Endothelial cell of umbilical vein (primary cell): ENCODE measurements at regions of chr2 and their contacts with region 1.

Region 1: DNA sequence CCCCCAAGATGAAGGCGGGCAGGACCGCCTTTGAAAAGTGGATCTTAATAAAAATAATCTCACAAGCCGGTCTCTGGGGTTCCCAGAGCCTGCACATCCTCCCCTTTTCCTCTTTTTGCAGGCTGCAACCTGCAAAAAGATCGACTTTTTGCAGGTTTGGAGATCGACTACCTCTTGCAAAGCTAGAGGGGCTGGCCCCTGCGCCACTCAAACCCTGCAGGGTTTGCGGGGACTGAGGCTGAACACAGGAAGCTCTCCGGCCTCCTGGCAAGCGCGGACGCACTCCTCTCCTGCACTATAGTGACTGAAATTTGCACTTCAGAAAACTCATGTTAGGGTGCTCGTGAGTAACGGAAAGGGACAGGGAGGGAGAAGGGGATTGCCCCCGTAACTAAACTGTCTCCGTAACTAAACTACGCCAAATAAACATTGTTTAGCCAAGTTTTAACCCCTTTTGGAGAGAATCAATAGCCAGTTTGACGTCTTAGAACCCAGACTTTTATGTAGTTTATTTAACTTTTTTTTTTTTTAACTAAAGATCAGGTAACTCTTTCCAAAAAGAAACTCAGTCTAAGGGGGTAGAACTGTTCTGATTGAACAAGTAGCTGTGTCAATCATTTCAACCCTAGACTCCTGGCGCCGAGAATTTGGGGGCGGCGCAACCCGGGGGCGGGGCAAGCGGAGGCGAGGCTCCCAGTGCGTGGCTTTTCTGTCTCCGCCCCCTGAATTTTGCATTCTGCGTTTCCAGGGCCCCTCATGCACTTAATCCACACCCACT is 2.5 kb downstream of the IGFBP5 start:
- DNase-seq: peak; percentile 46
- H3K4me3 ChIP-seq: peak overlapping the region; percentile 31 to 55 (median 48)
- H3K27ac ChIP-seq: no peak overlapping the region
- H3K4me1 ChIP-seq: peaks cover 20% of the 10 kb centered on the region
- H3K27me3 ChIP-seq: peaks cover 73 to 76% of the 10 kb centered on the region in 2 experiments
- CTCF ChIP-seq: no peak
- POLR2A ChIP-seq: no peak

Region 2: DNA sequence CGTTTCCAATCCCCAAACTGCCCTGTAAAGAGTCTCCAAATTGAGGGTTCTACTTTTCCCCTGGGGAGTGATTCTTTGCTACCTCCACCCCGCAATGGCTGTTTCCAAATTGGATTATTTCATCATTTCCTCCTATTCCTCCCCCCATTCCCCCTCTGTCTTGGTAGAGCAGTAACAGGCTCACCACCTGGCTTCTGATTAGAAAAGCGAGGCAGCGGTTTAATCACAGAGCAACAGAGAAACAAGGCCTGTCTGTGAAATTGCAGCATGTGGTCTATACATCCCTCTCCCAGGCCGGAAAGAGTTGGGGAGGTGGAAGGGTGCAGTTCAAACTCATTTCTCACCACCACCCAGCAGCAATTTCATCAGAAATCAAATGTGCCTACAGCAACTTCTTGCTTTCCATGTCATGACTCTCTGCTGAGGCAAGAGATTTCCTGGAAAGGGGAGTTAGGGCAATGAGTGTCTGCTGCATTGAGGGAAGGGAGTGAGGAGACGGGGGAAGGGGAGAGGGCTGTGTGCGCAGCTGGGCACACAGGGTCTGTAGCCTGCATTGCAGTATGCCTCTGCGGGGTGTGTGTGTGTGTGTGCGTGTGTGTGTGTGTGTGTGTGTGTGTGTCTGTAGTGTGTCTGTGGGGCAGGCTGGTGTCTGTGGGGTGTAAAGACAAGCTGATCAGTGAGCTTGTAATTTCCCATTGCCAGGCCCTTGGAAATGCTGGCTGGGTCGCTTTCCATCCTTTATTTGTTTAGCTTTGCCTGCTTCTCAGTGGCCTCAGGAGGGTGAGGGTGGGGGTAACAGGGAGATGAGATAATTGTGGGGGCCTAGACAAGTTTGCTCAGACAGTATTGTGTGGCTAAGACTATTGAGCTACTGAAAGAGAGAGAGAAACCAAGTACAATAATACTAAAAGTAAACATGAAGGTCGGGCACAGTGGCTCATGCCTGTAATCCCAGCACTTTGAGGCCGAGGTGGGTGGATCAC is 73.1 kb before region 1 on chr2:
- CTCF ChIA-PET with region 1: no interaction called
- POLR2A ChIA-PET with region 1: no interaction called
- dilution Hi-C with region 1: no loop called
- intact Hi-C with region 1: no loop called
- DNase-seq: no peak
- H3K4me3 ChIP-seq: no peak overlapping the region
- H3K27ac ChIP-seq: no peak overlapping the region
- H3K4me1 ChIP-seq: no peaks in the 10 kb centered on the region
- H3K27me3 ChIP-seq: peaks cover 3 to 5% of the 10 kb centered on the region in 2 experiments
- CTCF ChIP-seq: no peak
- POLR2A ChIP-seq: no peak

Region 3: DNA sequence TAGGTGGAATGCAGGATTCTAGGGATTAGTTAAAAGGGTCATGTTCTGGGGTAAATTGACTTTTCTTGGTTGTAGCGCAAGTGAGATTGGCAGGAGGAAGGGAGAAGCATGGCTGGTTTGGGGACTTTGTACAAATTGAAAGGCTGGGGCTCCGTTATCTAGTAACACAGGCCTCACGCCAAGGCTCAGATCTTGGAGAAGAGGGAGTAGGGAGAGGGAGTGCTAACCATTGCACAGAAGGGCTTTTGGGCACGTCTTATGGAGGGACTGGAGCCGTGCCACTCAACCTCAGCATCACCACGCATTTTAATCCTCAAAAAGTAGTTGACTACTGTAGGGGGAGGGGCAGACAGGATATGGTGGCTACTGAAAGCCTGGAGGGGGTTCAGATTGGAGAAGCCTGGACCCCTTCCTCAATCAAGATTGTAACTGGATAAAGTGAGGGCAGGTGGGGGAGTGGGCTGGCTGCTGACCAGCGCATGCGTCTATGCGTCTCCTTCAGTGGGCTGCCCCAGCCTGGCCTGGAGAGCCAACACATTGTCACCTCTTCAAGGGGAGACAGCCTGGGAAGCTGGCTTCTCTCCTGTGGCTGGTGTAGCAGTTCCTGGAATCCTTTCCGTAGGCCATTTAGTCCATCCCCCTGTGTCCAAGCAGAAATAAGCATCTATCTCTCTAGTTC is 11.7 kb before region 1 on chr2:
- CTCF ChIA-PET with region 1: interaction called, 14 read pairs
- POLR2A ChIA-PET with region 1: no interaction called
- dilution Hi-C with region 1: no loop called
- intact Hi-C with region 1: no loop called
- DNase-seq: no peak
- H3K4me3 ChIP-seq: no peak overlapping the region
- H3K27ac ChIP-seq: no peak overlapping the region
- H3K4me1 ChIP-seq: no peaks in the 10 kb centered on the region
- H3K27me3 ChIP-seq: peaks cover 0 to 13% of the 10 kb centered on the region in 2 experiments
- CTCF ChIP-seq: no peak
- POLR2A ChIP-seq: no peak

Region 4: DNA sequence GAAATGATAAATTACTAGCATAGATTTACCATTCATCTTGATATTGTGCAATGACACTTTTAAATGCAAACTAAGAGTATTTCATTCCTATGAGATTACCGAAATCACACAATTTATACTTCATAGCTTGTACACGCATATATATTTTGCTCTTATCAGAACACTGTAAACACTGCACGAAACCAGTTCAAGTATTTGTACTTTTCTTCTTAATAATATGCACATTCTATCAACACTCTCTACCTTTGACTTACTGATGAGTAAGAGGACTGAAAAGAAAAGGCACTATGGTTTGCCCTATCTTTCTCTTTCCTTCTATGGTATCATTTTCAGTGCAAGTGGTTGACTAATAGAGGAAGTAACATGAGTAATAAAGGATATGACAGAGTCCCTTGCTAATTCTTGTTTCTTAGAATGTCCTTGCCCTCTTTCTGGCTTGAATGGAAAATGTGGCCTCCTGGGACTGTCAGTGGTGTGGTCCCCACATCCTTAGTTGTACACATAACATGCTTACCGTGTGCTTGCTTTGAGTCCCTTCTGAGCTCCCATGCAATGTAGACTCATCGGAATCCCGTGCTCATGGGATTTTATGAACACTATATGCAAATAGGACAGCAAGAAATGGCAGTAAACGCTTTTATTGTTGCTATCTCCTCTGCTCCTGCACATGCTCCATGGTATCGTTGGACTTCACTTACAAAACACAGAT is 530.6 kb after region 1 on chr2:
- CTCF ChIA-PET with region 1: no interaction called
- POLR2A ChIA-PET with region 1: no interaction called
- dilution Hi-C with region 1: no loop called
- intact Hi-C with region 1: loop called (anchors 5 kb)
- DNase-seq: peak; percentile 90
- H3K4me3 ChIP-seq: no peak overlapping the region
- H3K27ac ChIP-seq: peak overlapping the region; percentile 89
- H3K4me1 ChIP-seq: peaks cover 13% of the 10 kb centered on the region
- H3K27me3 ChIP-seq: no peaks in the 10 kb centered on the region
- CTCF ChIP-seq: no peak
- POLR2A ChIP-seq: no peak